ENCODE measurements at regions of chr6 and their contacts with region 1.

Region 1: GRCh38 chr6:56843573-56844349 is 111.1 kb upstream of the BEND6 start:
- DNase-seq: peak; percentile 66
- ATAC-seq: peak; percentile 91
- H3K4me3 ChIP-seq: peak overlapping the region; percentile 95
- H3K27ac ChIP-seq: peak overlapping the region; percentile 82
- H3K4me1 ChIP-seq: peaks cover 45% of the 10 kb centered on the region
- H3K27me3 ChIP-seq: no peaks in the 10 kb centered on the region
- CTCF ChIP-seq: peak; percentile 66 to 70 (median 70); a peak in 5 of 6 replicates
- EP300 ChIP-seq: no peak
- POLR2A ChIP-seq: peak; percentile 71
- RAD21 ChIP-seq: peak; percentile 67

Region 2: GRCh38 chr6:56637640-56638039 is 206.1 kb before region 1 on chr6:
- CTCF ChIA-PET with region 1: interaction called, 7 read pairs
- POLR2A ChIA-PET with region 1: no interaction called
- RAD21 ChIA-PET with region 1: interaction called, 4 read pairs
- SMC1A ChIA-PET with region 1: interaction called, 52 read pairs
- in situ Hi-C with region 1: loop called (anchors 10 kb)
- intact Hi-C with region 1: no loop called
- DNase-seq: peak; percentile 7
- ATAC-seq: peak; percentile 52; the same call in 2 of the 3 replicates
- H3K4me3 ChIP-seq: no peak overlapping the region
- H3K27ac ChIP-seq: no peak overlapping the region
- H3K4me1 ChIP-seq: no peaks in the 10 kb centered on the region
- H3K27me3 ChIP-seq: no peaks in the 10 kb centered on the region
- CTCF ChIP-seq: peak; percentile 51 to 59 (median 55); a peak in 5 of 6 replicates
- EP300 ChIP-seq: no peak
- POLR2A ChIP-seq: no peak
- RAD21 ChIP-seq: peak; percentile 74

Region 3: GRCh38 chr6:56772737-56773184 is 71.0 kb before region 1 on chr6:
- CTCF ChIA-PET with region 1: interaction called, 494 read pairs
- POLR2A ChIA-PET with region 1: interaction called, 13 read pairs
- RAD21 ChIA-PET with region 1: interaction called, 450 read pairs
- SMC1A ChIA-PET with region 1: interaction called, 358 read pairs
- in situ Hi-C with region 1: loop called (anchors 5 kb)
- intact Hi-C with region 1: loop called (anchors 5 kb)
- DNase-seq: no peak
- ATAC-seq: peak; percentile 53
- H3K4me3 ChIP-seq: no peak overlapping the region
- H3K27ac ChIP-seq: no peak overlapping the region
- H3K4me1 ChIP-seq: peaks cover 41% of the 10 kb centered on the region
- H3K27me3 ChIP-seq: no peaks in the 10 kb centered on the region
- CTCF ChIP-seq: 0 out of 6 replicates have a peak, but pooled peaks of 2 of the 3 experiments have one; percentile 10 to 16
- EP300 ChIP-seq: no peak
- POLR2A ChIP-seq: no peak
- RAD21 ChIP-seq: peak; percentile 25; the same call in 1 of the 2 replicates

Region 4: DNA sequence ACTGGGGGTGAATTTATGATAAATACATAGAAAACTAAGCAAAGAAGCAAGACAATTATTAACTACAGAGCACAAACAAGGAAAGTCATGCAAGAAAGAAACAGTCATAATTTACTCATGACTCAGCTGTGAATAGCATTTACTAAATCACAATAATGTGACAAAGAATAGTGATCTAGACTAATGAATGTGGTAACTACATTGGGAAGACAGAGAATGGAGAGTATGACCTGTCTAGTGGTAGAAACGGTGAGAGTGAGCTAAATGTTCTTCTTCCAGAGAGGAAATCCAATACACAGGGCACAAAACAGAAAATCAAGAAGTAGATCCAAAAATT is 47.6 kb before region 1 on chr6:
- CTCF ChIA-PET with region 1: interaction called, 4 read pairs
- POLR2A ChIA-PET with region 1: interaction called, 4 read pairs
- RAD21 ChIA-PET with region 1: interaction called, 8 read pairs
- SMC1A ChIA-PET with region 1: interaction called, 13 read pairs
- in situ Hi-C with region 1: no loop called
- intact Hi-C with region 1: loop called (anchors 5 kb)
- DNase-seq: no peak
- ATAC-seq: peak; percentile 71
- H3K4me3 ChIP-seq: no peak overlapping the region
- H3K27ac ChIP-seq: 0 out of 2 replicates have a peak overlapping the region, but pooled peaks have one; percentile 47
- H3K4me1 ChIP-seq: peaks cover 49% of the 10 kb centered on the region
- H3K27me3 ChIP-seq: no peaks in the 10 kb centered on the region
- CTCF ChIP-seq: no peak
- EP300 ChIP-seq: peak in 1 of 2 experiments; percentile 34; a peak in 1 of 4 replicates
- POLR2A ChIP-seq: no peak
- RAD21 ChIP-seq: no peak

Region 5: DNA sequence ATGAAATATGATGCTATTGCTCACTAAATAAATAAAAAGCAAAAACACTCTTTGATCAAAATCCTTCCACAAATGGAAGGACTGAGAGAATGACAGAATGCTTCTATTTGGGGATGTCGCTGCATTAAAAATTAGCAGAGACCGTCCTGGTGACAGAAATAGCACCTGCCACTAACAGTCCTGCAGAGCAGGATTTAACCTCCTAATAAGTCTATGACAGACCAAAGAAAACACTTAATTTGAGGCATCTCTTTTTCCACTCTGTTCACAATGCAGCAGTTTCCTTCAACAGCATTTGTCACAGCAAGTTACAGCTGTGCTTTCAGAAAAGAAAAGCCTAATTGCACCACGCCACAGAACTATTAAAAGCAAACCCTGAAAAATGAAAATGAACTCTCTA is 29.5 kb before region 1 on chr6:
- CTCF ChIA-PET with region 1: interaction called, 10 read pairs
- POLR2A ChIA-PET with region 1: interaction called, 6 read pairs
- RAD21 ChIA-PET with region 1: interaction called, 6 read pairs
- SMC1A ChIA-PET with region 1: interaction called, 38 read pairs
- in situ Hi-C with region 1: no loop called
- intact Hi-C with region 1: no loop called
- DNase-seq: peak; percentile 47
- ATAC-seq: peak; percentile 79
- H3K4me3 ChIP-seq: peak overlapping the region; percentile 18; the same call in 1 of the 2 replicates
- H3K27ac ChIP-seq: peak overlapping the region; percentile 22; the same call in 1 of the 2 replicates
- H3K4me1 ChIP-seq: peaks cover 33% of the 10 kb centered on the region
- H3K27me3 ChIP-seq: no peaks in the 10 kb centered on the region
- CTCF ChIP-seq: no peak
- EP300 ChIP-seq: 0 out of 4 replicates have a peak, but pooled peaks of 1 of the 2 experiments have one; percentile 11
- POLR2A ChIP-seq: no peak
- RAD21 ChIP-seq: no peak

Region 6: GRCh38 chr6:56833127-56833791 is 10.5 kb before region 1 on chr6:
- CTCF ChIA-PET with region 1: interaction called, 6 read pairs
- POLR2A ChIA-PET with region 1: interaction called, 5 read pairs
- RAD21 ChIA-PET with region 1: interaction called, 5 read pairs
- SMC1A ChIA-PET with region 1: interaction called, 12 read pairs
- in situ Hi-C with region 1: no loop called
- intact Hi-C with region 1: no loop called
- DNase-seq: no peak
- ATAC-seq: peak; percentile 75
- H3K4me3 ChIP-seq: no peak overlapping the region
- H3K27ac ChIP-seq: no peak overlapping the region
- H3K4me1 ChIP-seq: peaks cover 21% of the 10 kb centered on the region; the same call in 1 of the 2 replicates
- H3K27me3 ChIP-seq: no peaks in the 10 kb centered on the region
- CTCF ChIP-seq: no peak
- EP300 ChIP-seq: no peak
- POLR2A ChIP-seq: no peak
- RAD21 ChIP-seq: no peak

Region 7: DNA sequence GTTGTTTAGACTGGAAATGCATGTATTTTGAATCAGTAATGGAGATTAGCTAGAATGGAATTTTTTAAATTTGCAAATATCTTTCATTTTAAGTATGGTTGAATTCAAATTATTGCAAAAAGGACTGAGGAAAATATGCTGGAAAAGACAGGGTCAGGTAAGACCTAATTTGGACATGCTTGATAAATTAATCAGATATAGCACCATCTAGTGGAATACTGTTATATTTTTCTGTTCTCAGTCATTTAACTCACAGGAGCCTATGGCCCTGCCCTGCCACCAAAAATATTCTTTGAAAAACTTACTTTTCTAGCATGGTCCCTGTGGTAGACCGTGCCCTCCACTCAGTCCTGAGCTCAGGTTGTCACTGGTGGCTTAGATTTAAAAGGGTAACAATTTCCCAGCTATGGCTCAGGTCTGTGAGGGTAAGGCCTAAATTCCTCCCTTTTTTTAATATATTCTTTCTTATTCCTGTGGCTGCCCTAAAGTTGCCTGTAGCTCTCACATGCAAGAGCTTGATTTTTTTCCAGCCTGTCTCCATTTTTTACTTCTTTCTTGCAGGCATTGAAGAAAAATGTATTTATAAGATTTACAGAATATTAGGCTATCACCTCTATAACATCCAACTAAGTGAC is 177.4 kb after region 1 on chr6:
- CTCF ChIA-PET with region 1: no interaction called
- POLR2A ChIA-PET with region 1: no interaction called
- RAD21 ChIA-PET with region 1: no interaction called
- SMC1A ChIA-PET with region 1: no interaction called
- in situ Hi-C with region 1: no loop called
- intact Hi-C with region 1: no loop called
- DNase-seq: no peak
- ATAC-seq: peak; percentile 94
- H3K4me3 ChIP-seq: no peak overlapping the region
- H3K27ac ChIP-seq: no peak overlapping the region
- H3K4me1 ChIP-seq: no peaks in the 10 kb centered on the region
- H3K27me3 ChIP-seq: no peaks in the 10 kb centered on the region
- CTCF ChIP-seq: peak; percentile 38 to 47 (median 43); a peak in 4 of 6 replicates
- EP300 ChIP-seq: no peak
- POLR2A ChIP-seq: no peak
- RAD21 ChIP-seq: peak; percentile 27; the same call in 1 of the 2 replicates

Region 8: GRCh38 chr6:57130661-57131177 is 287.0 kb after region 1 on chr6:
- CTCF ChIA-PET with region 1: no interaction called
- POLR2A ChIA-PET with region 1: no interaction called
- RAD21 ChIA-PET with region 1: no interaction called
- SMC1A ChIA-PET with region 1: no interaction called
- in situ Hi-C with region 1: no loop called
- intact Hi-C with region 1: no loop called
- DNase-seq: no peak
- ATAC-seq: no peak
- H3K4me3 ChIP-seq: no peak overlapping the region
- H3K27ac ChIP-seq: no peak overlapping the region
- H3K4me1 ChIP-seq: no peaks in the 10 kb centered on the region
- H3K27me3 ChIP-seq: no peaks in the 10 kb centered on the region
- CTCF ChIP-seq: no peak
- EP300 ChIP-seq: no peak
- POLR2A ChIP-seq: no peak
- RAD21 ChIP-seq: no peak

Measured in GM12878 (cell line).